Posterior cingulate gyrus (tissue), 11 donors: ENCODE measurements at regions of chr1 and their contacts with region 1.

Region 1: DNA sequence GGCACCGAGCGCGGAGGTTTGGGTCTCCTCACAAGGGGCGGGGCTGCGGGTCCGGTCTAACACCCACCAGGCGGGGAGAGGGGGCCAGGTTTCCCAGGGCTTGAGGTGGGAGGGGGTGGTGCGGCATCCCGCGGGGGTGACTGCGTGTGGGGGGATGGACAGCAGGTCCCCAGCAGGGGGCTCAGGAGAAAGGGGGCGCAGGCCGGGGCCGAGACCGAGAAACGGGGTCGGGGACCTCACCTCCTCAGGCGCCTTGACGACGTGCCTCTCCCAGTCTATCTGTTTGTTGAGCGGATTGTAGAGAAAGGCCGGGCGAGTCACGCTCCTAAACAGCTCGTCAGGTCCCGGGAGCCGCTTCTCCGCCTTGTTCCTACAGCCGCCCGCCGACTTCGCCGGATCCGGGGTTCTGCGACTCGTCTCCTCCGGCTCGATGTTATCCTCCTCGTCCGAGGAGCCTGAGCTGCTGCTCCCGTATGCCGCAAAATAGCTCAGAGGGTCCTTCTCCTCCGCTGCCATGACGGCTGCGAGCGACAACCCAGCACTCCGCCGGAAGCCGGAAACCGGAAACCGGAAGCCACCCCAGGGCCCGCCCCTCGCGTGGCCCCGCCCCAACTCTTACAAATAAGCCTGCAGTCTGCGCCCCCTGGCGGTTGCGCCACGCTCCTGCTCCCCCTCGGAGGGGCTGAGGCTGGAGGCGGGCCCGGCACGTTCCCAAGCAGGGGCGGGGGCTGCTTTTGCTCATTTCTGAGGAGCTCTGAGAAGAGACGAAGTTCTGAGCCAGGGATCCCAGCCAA is at the start of gene C1orf52:
- DNase-seq: peak; percentile 86 to 100 (median 96)

Region 2: DNA sequence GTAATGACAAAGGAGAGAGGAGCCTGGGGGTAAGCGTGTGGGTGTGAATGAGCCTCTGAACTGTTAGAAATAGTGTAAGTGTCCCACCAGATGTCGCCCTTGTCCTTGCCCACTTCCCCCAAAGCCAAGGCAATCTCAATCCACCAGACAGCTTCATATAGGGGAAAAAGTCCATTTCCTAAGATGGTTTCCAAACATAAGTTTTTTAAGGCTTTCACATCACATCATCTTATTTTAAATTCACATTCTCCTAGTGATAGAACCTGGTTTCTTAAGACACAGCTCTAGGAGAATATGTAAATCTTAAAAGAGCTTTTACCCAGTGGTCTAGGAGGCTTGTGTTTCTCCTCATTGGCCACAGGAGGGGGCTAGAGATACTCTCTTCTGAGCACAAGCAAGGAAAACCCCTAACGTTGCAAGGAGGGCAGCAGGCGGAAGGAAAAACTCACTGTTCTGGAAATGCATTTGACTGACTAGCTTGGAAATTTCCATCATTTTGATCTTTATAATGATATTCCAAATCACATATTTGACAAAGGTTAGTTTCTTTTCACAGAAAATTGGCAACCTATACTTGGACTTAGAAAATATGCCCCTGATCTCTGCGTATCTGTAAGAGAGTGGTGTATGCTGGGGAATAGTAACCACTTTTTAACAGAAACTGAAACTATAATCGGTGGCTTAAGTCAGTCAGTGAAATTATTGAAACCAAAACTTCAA is 314.4 kb before region 1 on chr1:
- intact Hi-C with region 1: loop called (anchors 2 kb)
- DNase-seq: peak in 8 of 10 donors; percentile 32 to 90 (median 47)

Region 3: GRCh38 chr1:85109475-85109874 is 149.8 kb before region 1 on chr1:
- intact Hi-C with region 1: loop called (anchors 5 kb)
- DNase-seq: peak in 6 of 10 donors; percentile 11 to 91 (median 33)

Region 4: GRCh38 chr1:85166351-85166750 is 93.0 kb before region 1 on chr1:
- intact Hi-C with region 1: no loop called
- DNase-seq: no peak